PC-3 (cell line): ENCODE measurements at regions of chr1 and their contacts with region 1.

Region 1: DNA sequence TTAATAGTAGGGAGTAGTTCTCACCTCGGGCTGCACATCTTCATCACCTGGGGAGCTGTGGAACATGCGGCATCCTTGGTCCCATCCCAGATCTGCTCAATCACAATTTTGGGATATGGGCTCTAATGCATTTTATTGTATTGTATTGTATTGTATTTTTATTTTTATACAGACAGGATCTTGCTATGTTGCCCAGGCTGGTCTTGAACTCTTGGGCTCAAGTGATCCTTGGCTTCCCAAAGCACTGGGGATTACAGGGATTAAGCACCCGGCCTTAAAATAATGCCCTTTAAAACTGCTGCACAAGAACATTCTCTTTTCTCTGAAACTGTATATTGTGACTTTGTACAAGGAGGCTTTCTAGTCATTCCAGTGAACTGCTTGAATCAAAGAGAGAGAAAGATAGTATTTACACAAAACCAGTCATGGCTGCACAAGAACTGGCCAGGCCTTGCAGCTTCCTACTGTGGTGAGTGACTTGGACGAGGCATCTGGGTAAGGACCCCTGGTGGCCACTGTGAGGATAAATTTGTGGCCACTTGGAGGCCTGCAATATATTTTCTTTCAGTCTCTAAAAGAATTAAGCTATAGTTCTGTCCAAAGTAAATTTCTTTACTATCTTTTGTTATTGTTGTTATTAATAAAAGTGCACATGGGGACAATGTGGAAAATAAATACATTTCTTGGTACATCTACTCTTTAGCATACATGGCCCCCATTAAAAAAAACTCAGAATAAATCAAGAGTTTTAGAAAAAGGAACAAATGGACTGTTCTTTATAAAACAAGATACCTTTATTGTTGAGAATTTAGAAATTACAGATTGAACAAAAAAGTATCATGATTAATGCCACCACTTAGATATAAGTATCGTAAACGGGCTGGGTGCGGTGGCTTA is 48.0 kb downstream of the TBCE start:
- DNase-seq: peak; percentile 71
- ATAC-seq: peak; percentile 91
- H3K4me3 ChIP-seq: no peak overlapping the region
- H3K27ac ChIP-seq: no peak overlapping the region
- H3K4me1 ChIP-seq: peaks cover 6% of the 10 kb centered on the region; the same call in 1 of the 2 replicates
- H3K27me3 ChIP-seq: no peaks in the 10 kb centered on the region
- CTCF ChIP-seq: peak; percentile 73

Region 2: DNA sequence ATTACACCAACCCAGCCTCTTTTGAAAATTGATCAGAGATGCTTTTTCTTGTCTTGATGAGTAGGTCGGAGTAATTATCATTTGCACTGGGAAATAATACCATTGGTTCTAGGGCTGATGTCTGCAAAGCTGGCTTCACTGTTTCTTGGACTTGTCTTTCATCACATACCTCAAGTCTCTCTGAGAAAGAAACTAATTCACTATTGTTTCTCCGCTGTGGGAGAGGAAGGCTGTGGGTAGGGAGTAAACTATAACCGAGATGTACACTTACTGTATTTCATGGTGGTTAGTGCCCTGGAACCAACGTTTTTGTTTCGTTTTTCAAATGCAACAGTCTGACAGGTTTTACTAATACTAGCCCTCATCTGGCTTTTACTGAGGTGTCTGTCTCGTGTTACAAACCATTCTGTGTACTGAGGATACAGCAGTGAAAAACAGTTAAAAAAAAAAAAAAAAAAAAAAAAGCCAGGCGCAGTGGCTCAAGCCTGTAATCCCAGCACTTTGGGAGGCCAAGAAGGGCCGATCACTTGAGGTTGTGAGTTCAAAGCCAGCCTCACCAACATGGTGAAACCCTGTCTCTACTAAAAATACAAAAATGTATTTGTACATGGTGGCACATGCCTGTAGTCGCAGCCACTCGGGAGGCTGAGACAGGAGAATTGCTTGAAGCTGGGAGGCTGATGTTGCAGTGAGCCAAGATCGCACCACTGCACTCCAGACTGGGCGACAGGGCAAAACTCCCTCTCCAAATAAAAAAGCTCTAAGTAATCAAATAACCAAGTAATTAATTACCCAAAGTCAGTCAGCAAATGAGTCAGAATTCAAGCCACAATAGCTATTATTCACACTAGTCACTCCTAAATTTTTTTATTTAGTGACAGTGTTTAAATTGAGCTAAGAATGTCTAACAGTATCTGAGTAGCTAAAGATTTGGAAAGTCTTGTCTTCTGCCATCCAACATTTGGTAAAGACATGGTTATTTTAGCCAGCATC is 309.9 kb before region 1 on chr1:
- CTCF ChIA-PET with region 1: interaction called, 3 read pairs
- POLR2A ChIA-PET with region 1: no interaction called
- intact Hi-C with region 1: loop called (anchors 2 kb)
- DNase-seq: no peak
- ATAC-seq: peak; percentile 31
- H3K4me3 ChIP-seq: peak overlapping the region; percentile 61
- H3K27ac ChIP-seq: 0 out of 2 replicates have a peak overlapping the region, but pooled peaks have one; percentile 13
- H3K4me1 ChIP-seq: peaks cover 11% of the 10 kb centered on the region
- H3K27me3 ChIP-seq: no peaks in the 10 kb centered on the region
- CTCF ChIP-seq: no peak

Region 3: DNA sequence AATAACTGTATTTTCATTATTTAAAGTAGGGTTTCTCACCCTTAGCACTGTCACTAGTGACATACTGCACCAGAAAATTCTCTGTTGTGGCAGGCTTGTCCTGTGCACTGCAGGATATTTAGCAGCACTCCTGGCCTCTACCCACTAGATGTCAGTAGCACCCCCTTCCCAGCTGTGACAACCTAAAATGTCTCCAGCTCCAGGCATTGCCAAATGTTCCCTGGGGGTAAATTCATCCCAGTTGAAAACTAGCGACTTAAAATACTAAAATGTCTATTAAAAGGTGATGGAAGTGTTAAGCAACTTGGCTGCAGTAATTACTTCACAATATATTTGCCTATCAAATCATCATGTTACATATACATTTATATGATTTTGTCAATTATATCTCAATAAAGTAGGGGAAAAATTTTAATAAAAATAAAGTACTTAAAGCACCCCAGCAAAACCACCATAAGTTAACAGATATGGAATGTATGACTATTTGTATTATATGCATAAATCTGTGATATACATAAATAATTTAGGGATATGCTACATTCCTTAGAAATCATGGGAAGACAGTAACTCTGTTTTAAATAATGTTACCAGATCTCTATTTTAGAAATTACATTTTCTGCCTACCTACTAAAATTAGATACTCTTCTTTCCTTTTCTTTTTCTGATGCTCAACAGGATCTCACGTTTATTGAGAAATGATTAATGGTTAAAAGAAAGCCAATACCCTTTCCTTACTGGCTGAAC is 161.9 kb before region 1 on chr1:
- CTCF ChIA-PET with region 1: no interaction called
- POLR2A ChIA-PET with region 1: interaction called, 7 read pairs
- intact Hi-C with region 1: loop called (anchors 1 kb)
- DNase-seq: peak; percentile 77
- ATAC-seq: peak; percentile 88
- H3K4me3 ChIP-seq: no peak overlapping the region
- H3K27ac ChIP-seq: no peak overlapping the region
- H3K4me1 ChIP-seq: no peaks in the 10 kb centered on the region
- H3K27me3 ChIP-seq: no peaks in the 10 kb centered on the region
- CTCF ChIP-seq: peak; percentile 78

Region 4: GRCh38 chr1:235328357-235329138 is 86.7 kb before region 1 on chr1 and contains the start of gene GGPS1:
- CTCF ChIA-PET with region 1: interaction called, 5 read pairs
- POLR2A ChIA-PET with region 1: no interaction called
- intact Hi-C with region 1: loop called (anchors 2 kb)
- DNase-seq: peak; percentile 98
- ATAC-seq: peak; percentile 86
- H3K4me3 ChIP-seq: peak within 1 kb of the TSS; percentile 97
- H3K27ac ChIP-seq: peak within 1 kb of the TSS; percentile 93
- H3K4me1 ChIP-seq: peaks cover 26% of the 10 kb centered on the region; the same call in 1 of the 2 replicates
- H3K27me3 ChIP-seq: no peaks in the 10 kb centered on the region
- CTCF ChIP-seq: no peak
- total RNA-seq, gene GGPS1: 9.3 and 17.4 TPM in 2 replicates

Region 5: DNA sequence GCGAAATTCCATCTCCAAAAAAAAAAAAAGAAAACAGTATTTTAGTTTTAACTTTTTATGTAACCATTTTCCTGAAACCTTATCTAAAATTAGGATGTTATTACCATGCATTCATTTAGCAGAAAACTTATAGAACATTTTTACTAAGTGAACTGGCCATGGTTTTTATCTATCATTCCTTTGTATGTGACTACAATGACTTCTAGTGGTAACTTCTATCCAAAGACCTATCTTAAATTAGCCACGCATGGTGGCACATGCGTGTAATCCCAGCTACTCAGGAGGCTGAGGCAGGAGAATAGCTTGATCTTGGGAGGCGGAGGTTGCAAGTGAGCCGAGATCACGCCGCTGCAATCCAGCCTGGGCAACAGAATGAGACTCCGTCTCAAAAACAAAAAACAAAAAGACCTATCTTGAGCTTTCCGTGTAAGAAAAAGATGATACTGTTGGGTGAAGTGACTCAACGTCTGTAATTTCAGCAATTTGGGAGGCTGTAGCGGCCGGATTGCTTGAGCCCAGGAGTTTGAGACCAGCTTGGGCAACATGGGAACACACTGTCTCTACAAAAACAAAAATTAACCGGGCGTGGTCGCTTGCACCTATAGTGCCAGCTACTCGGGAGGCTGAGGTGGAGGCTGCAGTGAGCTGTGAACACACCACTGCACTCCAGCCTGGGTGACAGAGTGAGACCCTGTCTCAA is 75.4 kb before region 1 on chr1:
- CTCF ChIA-PET with region 1: no interaction called
- POLR2A ChIA-PET with region 1: no interaction called
- intact Hi-C with region 1: no loop called
- DNase-seq: no peak
- ATAC-seq: no peak
- H3K4me3 ChIP-seq: no peak overlapping the region
- H3K27ac ChIP-seq: no peak overlapping the region
- H3K4me1 ChIP-seq: no peaks in the 10 kb centered on the region
- H3K27me3 ChIP-seq: no peaks in the 10 kb centered on the region
- CTCF ChIP-seq: no peak

Region 6: DNA sequence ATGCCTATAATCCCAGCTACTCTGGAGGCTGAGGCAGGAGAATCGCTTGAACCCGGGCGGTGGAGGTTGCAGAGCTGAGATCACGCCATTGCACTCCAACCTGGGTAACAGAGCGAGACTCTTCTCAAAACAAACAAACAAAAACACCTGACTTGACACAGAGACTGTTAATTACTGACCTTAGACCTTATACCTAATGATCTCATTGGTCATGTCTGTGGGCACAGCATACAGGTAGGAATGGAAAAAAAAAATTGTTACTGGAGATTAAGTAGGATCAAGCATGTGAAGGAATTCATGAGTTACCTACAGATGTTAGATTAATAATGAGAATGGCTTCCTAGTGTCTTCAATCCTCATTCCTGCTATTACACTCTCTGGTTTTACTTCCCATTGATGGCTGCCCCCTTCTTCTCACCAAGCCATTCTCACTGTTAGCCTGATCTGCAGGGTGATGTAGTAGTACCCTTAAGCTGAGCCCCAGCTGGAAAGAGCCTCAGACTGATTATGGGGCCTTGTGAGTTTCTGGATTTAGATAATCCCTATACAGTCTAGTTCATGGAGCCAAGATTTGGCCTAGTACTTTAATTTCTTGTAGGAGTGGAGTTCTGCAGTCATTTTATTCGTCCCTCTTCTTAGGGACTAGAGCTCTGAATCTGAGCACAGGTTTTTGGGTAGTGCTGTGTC is 39.2 kb before region 1 on chr1:
- CTCF ChIA-PET with region 1: no interaction called
- POLR2A ChIA-PET with region 1: no interaction called
- intact Hi-C with region 1: no loop called
- DNase-seq: no peak
- ATAC-seq: no peak
- H3K4me3 ChIP-seq: no peak overlapping the region
- H3K27ac ChIP-seq: no peak overlapping the region
- H3K4me1 ChIP-seq: no peaks in the 10 kb centered on the region
- H3K27me3 ChIP-seq: no peaks in the 10 kb centered on the region
- CTCF ChIP-seq: no peak

Region 7: DNA sequence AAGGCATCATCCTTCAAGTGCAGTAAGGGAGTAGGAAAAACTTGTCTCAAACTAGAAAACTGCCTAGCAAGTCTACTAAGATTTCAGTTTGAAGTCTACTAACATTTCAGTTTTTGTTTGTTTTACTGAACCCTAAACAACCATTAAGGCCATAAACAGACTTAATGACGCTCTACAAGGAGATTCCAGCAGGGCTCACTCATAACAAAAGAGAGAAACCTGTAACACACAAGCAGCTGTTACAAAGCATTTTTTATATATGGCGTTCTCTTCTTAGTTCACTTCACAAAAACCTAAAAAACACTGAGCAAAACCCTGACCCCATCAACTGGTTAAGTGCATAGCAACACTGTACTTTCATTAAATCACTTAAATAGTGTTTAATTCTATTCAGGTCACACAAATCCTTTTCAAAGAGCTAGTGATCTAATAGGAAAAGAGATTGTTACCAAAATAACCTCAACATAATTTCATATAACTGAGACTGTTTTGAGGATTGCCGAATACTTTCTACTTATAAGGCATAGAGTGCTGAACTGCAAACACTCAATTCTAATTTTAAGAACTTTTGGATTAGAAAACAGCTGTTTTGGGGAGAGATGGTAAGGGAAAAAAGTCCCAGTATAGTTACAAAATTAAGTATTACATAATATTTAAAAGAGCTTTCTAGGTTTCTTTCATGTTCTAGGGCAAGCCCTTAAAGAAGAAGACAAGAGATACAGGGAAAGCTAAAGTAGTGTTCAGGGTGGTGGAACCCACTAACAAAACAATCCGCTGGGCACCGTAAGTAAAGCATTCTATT is 87.5 kb after region 1 on chr1:
- CTCF ChIA-PET with region 1: no interaction called
- POLR2A ChIA-PET with region 1: no interaction called
- intact Hi-C with region 1: no loop called
- DNase-seq: peak; percentile 28
- ATAC-seq: no peak
- H3K4me3 ChIP-seq: peak overlapping the region; percentile 98
- H3K27ac ChIP-seq: no peak overlapping the region
- H3K4me1 ChIP-seq: peaks cover 20% of the 10 kb centered on the region
- H3K27me3 ChIP-seq: no peaks in the 10 kb centered on the region
- CTCF ChIP-seq: no peak

Region 8: GRCh38 chr1:235843461-235843961 is 428.3 kb after region 1 on chr1:
- CTCF ChIA-PET with region 1: no interaction called
- POLR2A ChIA-PET with region 1: no interaction called
- intact Hi-C with region 1: no loop called
- DNase-seq: peak; percentile 71
- ATAC-seq: peak; percentile 99
- H3K4me3 ChIP-seq: no peak overlapping the region
- H3K27ac ChIP-seq: no peak overlapping the region
- H3K4me1 ChIP-seq: no peaks in the 10 kb centered on the region
- H3K27me3 ChIP-seq: no peaks in the 10 kb centered on the region
- CTCF ChIP-seq: peak; percentile 68